ENCODE measurements at regions of chr1 and their contacts with region 1.

Region 1: GRCh38 chr1:159161001-159161718 is 10.3 kb upstream of the CADM3 start:
- DNase-seq: peak; percentile 53
- CTCF ChIP-seq: peak; percentile 97

Region 2: DNA sequence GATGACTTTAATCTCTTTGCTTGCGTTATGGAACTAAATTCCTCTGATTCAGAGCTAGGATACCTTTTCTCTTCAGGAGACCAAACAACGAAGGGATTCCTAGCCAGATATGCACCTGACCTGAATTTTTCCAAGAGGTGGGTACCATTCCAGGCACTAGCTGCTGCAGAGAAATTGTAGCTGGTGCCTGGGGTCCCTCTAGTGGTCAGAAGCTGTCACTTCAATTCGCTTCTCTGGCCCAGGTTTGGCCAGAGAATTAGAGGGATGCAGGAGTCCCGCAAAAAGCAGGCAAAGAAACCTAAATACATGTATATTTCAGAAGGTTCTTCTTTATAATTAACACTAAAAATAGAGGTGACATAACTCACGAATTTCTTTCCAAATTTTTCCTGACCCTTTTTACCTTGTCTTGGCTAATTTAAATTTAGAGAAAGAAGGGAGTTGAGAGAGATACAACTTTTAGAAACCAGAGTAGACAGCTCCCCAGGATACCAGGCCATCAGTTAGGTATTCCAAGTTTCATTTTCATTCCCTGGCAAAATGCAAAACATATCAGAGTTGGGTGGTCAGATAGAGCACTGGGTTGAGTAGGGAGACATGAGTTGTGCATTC is 53.1 kb after region 1 on chr1:
- in situ Hi-C with region 1: loop called (anchors 10 kb)
- DNase-seq: peak; percentile 59
- CTCF ChIP-seq: peak; percentile 82

Measured in GM13976 (cell line).